ENCODE measurements at regions of chr5 and their contacts with region 1.

Region 1: GRCh38 chr5:43396762-43397304 is 15.4 kb downstream of the CCL28 start:
- DNase-seq: peak; percentile 38 to 80 (median 62)
- ATAC-seq: peak; percentile 95 to 96
- H3K4me3 Mint-ChIP-seq: peak overlapping the region; percentile 94 to 100 (median 96)
- H3K27ac Mint-ChIP-seq: peak overlapping the region; percentile 94 to 100 (median 96)
- H3K4me1 Mint-ChIP-seq: peaks cover 19 to 47% (median 46%) of the 10 kb centered on the region in 4 donors
- H3K27me3 Mint-ChIP-seq: no peaks in the 10 kb centered on the region

Region 2: DNA sequence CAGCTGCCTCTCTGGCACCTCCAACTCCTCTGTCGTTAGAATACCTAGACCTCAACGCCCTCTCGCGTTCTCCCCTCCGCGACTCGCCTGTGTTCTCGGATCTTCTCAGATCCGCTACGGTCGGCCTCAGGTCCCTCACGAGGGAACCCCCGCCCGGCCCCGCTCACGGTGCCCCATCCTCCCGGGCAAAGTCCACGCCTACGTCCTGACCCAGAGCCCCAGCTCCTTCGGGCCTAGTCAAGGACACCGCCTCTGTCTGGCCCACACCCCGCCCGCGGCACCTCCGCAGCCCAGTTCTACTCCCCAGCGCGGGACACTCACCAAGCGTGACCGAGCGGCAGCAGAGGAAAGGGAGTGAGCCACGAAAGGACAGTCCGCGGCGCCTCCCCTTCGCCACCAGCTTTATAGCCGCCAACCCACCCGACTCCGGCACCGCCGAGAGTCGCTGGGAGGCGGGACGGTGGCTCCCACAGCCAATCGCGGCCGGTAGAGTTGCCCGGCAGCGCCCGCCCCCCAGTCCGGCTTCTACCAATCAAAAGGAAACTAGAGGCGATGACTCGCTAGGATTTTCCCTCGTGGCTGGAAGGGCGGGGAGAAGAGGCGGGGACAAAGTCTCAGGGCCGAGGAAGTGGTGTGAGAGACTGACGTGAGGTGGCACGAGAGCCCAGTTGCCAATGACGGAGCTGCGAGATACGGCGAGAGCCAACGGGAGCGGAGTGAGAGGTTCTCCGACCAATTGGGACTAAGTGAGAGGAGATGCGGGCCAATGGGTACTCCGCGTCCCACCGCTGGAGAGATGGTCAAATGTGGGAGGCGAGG is 83.6 kb before region 1 on chr5 and contains the start of gene HMGCS1:
- POLR2A ChIA-PET with region 1: interaction called, 12 read pairs
- DNase-seq: peak; percentile 94 to 100 (median 99)
- ATAC-seq: peak; percentile 90 to 92
- H3K4me3 Mint-ChIP-seq: peak within 1 kb of the TSS; percentile 90 to 99 (median 97)
- H3K27ac Mint-ChIP-seq: peak within 1 kb of the TSS; percentile 90 to 99 (median 96)
- H3K4me1 Mint-ChIP-seq: peaks cover 22 to 40% (median 34%) of the 10 kb centered on the region in 4 donors
- H3K27me3 Mint-ChIP-seq: peaks cover 0 to 2% (median 0%) of the 10 kb centered on the region in 5 donors
- polyA plus RNA-seq, gene HMGCS1: 4.0 to 11.6 (median 4.2) TPM

Region 3: GRCh38 chr5:43453606-43454005 is 56.8 kb after region 1 on chr5:
- POLR2A ChIA-PET with region 1: no interaction called
- DNase-seq: no peak
- ATAC-seq: no peak
- H3K4me3 Mint-ChIP-seq: no peak overlapping the region
- H3K27ac Mint-ChIP-seq: peak overlapping the region in 4 of 10 donors; percentile 7 to 46 (median 20)
- H3K4me1 Mint-ChIP-seq: peaks cover 0 to 8% (median 2%) of the 10 kb centered on the region in 4 donors
- H3K27me3 Mint-ChIP-seq: no peaks in the 10 kb centered on the region